ENCODE measurements at regions of chr6 and their contacts with region 1.

Region 1: GRCh38 chr6:6195080-6195479 is 125.4 kb downstream of the F13A1 start:
- DNase-seq: no peak
- H3K4me3 ChIP-seq: no peak overlapping the region
- H3K27ac ChIP-seq: no peak overlapping the region
- H3K4me1 ChIP-seq: no peaks in the 10 kb centered on the region
- H3K27me3 ChIP-seq: peaks cover 0 to 16% (median 0%) of the 10 kb centered on the region in 4 donors
- CTCF ChIP-seq: no peak
- POLR2A ChIP-seq: no peak

Region 2: GRCh38 chr6:6515691-6516607 is 320.9 kb after region 1 on chr6:
- intact Hi-C with region 1: loop called (anchors 5 kb)
- DNase-seq: no peak
- H3K4me3 ChIP-seq: no peak overlapping the region
- H3K27ac ChIP-seq: no peak overlapping the region
- H3K4me1 ChIP-seq: no peaks in the 10 kb centered on the region
- H3K27me3 ChIP-seq: peaks cover 0 to 35% (median 0%) of the 10 kb centered on the region in 4 donors
- CTCF ChIP-seq: no peak
- POLR2A ChIP-seq: no peak